Activated CD8-positive, alpha-beta T cell treated with anti-CD3 and anti-CD28 coated beads for 36 hours (primary cell): ENCODE measurements at regions of chr17 and their contacts with region 1.

Region 1: GRCh38 chr17:43878260-43879175 is 28.8 kb downstream of the MPP2 start:
- DNase-seq: peak; percentile 73
- ATAC-seq: peak; percentile 95
- H3K4me3 Mint-ChIP-seq: no peak overlapping the region
- H3K27ac Mint-ChIP-seq: no peak overlapping the region
- H3K4me1 Mint-ChIP-seq: no peaks in the 10 kb centered on the region
- H3K27me3 Mint-ChIP-seq: peaks cover under 1% of the 10 kb centered on the region
- CTCF ChIP-seq: peak; percentile 82

Region 2: GRCh38 chr17:43676471-43676870 is 202.0 kb before region 1 on chr17:
- CTCF ChIA-PET with region 1: no interaction called
- POLR2A ChIA-PET with region 1: no interaction called
- intact Hi-C with region 1: no loop called
- DNase-seq: no peak
- ATAC-seq: no peak
- H3K4me3 Mint-ChIP-seq: no peak overlapping the region
- H3K27ac Mint-ChIP-seq: no peak overlapping the region
- H3K4me1 Mint-ChIP-seq: peaks cover 5% of the 10 kb centered on the region
- H3K27me3 Mint-ChIP-seq: peaks cover 3% of the 10 kb centered on the region
- CTCF ChIP-seq: no peak

Region 3: GRCh38 chr17:43846221-43846712 is 32.3 kb before region 1 on chr17:
- CTCF ChIA-PET with region 1: interaction called, 18 read pairs
- POLR2A ChIA-PET with region 1: no interaction called
- intact Hi-C with region 1: no loop called
- DNase-seq: peak; percentile 85
- ATAC-seq: peak; percentile 100
- H3K4me3 Mint-ChIP-seq: no peak overlapping the region
- H3K27ac Mint-ChIP-seq: no peak overlapping the region
- H3K4me1 Mint-ChIP-seq: no peaks in the 10 kb centered on the region
- H3K27me3 Mint-ChIP-seq: peaks cover 12% of the 10 kb centered on the region
- CTCF ChIP-seq: peak; percentile 95

Region 4: DNA sequence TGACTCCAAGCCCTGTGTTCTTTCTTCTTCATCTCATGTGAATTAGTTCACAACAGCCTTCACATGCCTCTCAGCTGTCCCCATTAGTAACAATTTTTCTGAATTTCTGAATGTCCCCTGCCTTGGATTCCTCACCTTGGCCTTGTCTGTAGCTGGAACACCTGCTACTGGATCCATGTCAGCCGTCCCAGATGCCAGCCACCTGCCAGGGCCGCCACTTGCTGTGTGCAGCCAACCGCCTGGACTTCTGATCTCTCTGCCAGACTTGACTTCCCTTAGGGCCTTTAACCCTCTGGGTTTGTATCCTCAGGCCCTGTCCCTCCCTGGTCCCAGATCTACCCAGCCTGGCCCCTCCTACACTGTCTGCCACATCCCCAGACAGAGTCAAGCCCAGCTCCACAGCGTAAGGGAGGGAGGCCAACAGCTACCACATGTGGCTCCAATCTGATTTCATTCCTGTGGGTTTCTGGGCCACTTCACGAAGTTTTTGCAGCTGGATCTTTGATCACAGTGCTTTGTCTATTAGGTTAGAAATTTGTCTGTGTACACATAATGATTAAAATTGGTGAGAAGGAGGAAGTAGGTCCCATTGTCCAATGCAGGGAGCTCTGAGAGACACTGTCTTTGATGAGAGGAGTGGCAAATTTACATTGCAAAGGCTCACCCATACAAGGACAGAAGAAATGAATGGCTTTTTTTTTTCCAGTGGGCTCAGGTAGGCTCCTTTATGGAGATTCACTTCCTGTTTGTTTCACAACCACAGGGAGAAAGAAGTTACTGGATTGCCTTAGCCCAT is 13.5 kb after region 1 on chr17:
- CTCF ChIA-PET with region 1: interaction called, 78 read pairs
- POLR2A ChIA-PET with region 1: no interaction called
- intact Hi-C with region 1: no loop called
- DNase-seq: no peak
- ATAC-seq: no peak
- H3K4me3 Mint-ChIP-seq: no peak overlapping the region
- H3K27ac Mint-ChIP-seq: no peak overlapping the region
- H3K4me1 Mint-ChIP-seq: no peaks in the 10 kb centered on the region
- H3K27me3 Mint-ChIP-seq: no peaks in the 10 kb centered on the region
- CTCF ChIP-seq: no peak

Region 5: GRCh38 chr17:43907425-43907981 is 29.0 kb after region 1 on chr17 and contains the start of gene MPP2:
- CTCF ChIA-PET with region 1: interaction called, 78 read pairs
- POLR2A ChIA-PET with region 1: no interaction called
- intact Hi-C with region 1: no loop called
- DNase-seq: peak; percentile 80
- ATAC-seq: peak; percentile 64
- H3K4me3 Mint-ChIP-seq: peak within 1 kb of the TSS; percentile 77
- H3K27ac Mint-ChIP-seq: peak within 1 kb of the TSS; percentile 67
- H3K4me1 Mint-ChIP-seq: peaks cover 12% of the 10 kb centered on the region
- H3K27me3 Mint-ChIP-seq: peaks cover 11% of the 10 kb centered on the region
- CTCF ChIP-seq: no peak
- total RNA-seq, gene MPP2: 6.0 TPM

Region 6: DNA sequence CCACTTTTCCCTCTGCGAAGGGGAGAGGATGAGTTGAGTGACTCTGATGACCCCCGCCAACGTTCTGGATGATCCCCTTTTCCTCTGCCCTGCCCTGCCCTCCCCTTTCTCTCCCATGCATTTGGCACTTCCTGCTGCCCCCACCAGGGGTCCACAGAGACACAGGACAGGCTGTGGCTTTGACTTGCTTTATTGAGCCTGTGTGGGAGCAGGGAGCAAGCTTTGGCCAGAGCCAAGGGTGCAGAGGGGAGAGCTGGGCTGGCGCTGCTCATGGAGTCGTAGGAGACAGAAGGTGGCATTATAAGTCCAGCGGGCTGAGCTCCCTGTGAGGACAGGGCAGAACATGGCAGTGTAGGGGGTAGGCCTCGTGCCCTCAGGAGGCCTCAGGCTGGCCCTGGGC is 62.1 kb after region 1 on chr17:
- CTCF ChIA-PET with region 1: interaction called, 19 read pairs
- POLR2A ChIA-PET with region 1: no interaction called
- intact Hi-C with region 1: no loop called
- DNase-seq: peak; percentile 49
- ATAC-seq: peak; percentile 42
- H3K4me3 Mint-ChIP-seq: no peak overlapping the region
- H3K27ac Mint-ChIP-seq: no peak overlapping the region
- H3K4me1 Mint-ChIP-seq: peaks cover 14% of the 10 kb centered on the region
- H3K27me3 Mint-ChIP-seq: peaks cover 5% of the 10 kb centered on the region
- CTCF ChIP-seq: peak; percentile 43